ENCODE measurements at regions of chr10 and their contacts with region 1.

Region 1: GRCh38 chr10:124388823-124389612 is 29.7 kb downstream of the OAT start:
- DNase-seq: peak; percentile 86 to 99 (median 93)
- ATAC-seq: peak; percentile 100
- H3K4me3 ChIP-seq: peak overlapping the region; percentile 30 to 49
- H3K27ac ChIP-seq: peak overlapping the region in 1 of 2 donors; percentile 48
- H3K4me1 ChIP-seq: peaks cover 4 to 15% of the 10 kb centered on the region in 2 donors
- H3K27me3 ChIP-seq: peaks cover 0 to 13% of the 10 kb centered on the region in 2 donors
- CTCF ChIP-seq: peak; percentile 91 to 98

Region 2: GRCh38 chr10:124000792-124001201 is 388.2 kb before region 1 on chr10:
- intact Hi-C with region 1: loop called in 1 of 2 experiments (anchors 5 kb)
- DNase-seq: peak in 1 of 4 donors; percentile 35
- ATAC-seq: no peak
- H3K4me3 ChIP-seq: no peak overlapping the region
- H3K27ac ChIP-seq: no peak overlapping the region
- H3K4me1 ChIP-seq: peaks cover 1 to 61% of the 10 kb centered on the region in 2 donors
- H3K27me3 ChIP-seq: no peaks in the 10 kb centered on the region
- CTCF ChIP-seq: no peak

Measured in left lung (tissue), 14 donors.